ENCODE measurements at regions of chr14 and their contacts with region 1.

Region 1: DNA sequence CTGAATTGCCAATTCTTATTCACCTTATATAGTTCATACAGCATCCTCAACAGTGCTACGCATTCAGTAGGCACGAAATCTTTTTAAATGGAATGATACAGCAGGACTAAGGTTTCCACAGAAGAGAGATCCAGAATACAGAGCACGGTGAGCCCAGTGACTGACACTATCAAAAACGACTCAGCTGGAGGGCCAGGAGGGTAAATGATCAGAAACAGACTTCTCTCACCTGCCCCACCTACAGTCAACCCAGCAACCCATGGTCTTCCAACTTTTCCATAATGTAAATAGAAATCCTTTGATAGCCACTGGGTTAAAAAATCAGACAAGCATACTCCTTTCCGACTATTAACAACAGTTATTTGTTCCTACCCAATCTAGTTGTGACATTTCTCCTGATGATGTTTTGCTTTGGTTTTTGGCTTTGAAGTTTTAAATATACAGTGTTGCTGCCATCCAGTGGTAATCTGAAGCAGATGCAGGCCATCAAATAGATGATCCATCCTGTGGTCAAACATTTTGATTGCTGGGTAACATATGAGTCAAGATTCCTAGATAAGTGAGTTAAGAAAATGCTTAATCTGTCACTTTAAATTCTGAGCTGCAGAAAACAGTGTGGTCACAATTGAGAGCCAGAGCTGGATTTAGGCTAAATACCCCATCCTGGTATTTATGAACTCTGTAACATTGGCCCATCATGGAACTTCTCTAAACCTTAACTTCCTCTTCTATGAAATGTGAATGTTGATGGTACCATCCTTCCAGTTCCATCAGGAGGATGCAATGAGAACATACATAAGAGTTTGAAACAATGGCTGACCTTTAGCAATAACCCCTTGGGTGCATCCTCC is 42.0 kb downstream of the GPHB5 start:
- DNase-seq: no peak
- H3K4me3 ChIP-seq: no peak overlapping the region
- H3K27ac ChIP-seq: no peak overlapping the region
- H3K4me1 ChIP-seq: no peaks in the 10 kb centered on the region
- H3K27me3 ChIP-seq: no peaks in the 10 kb centered on the region
- CTCF ChIP-seq: peak; percentile 66 to 79 (median 75)
- POLR2A ChIP-seq: no peak

Region 2: DNA sequence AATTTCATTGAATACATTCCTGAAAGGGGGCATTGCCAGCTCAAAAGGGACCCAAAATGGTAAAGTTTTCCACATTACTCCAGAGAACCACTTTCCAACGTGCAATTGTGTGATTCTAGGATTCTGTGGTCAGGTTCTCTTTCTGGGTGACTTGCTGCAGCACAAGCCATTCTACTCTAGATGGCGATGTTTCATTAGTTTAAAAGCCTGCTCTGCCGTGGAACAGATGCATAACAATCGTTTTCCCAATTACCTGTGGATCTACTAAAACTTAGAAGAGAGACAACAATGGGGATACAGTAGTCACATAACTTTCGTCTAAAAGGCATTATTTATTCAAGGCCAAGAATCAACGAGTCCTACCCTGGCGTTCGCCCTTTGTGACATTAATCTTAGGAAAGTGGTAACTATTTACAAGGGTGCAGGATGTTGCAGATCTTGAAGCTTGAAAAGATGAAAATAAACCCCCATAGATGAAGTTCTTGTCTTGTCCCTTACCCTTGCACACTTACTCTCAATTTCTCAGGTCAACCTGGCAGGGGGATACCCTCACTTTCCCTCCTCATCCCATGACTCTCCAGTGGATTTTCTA is 1113.6 kb before region 1 on chr14:
- intact Hi-C with region 1: loop called (anchors 10 kb)
- DNase-seq: peak; percentile 31
- H3K4me3 ChIP-seq: no peak overlapping the region
- H3K27ac ChIP-seq: no peak overlapping the region
- H3K4me1 ChIP-seq: no peaks in the 10 kb centered on the region
- H3K27me3 ChIP-seq: no peaks in the 10 kb centered on the region
- CTCF ChIP-seq: peak; percentile 34 to 59 (median 46)
- POLR2A ChIP-seq: no peak

Measured in testis (tissue), 5 donors.